ENCODE measurements at regions of chr5 and their contacts with region 1.

Region 1: GRCh38 chr5:138542956-138543729 is at the start of gene ETF1:
- DNase-seq: peak; percentile 95 to 100 (median 100)
- ATAC-seq: peak; percentile 95
- H3K4me3 ChIP-seq: peak within 1 kb of the TSS; percentile 87
- H3K4me3 Mint-ChIP-seq: peak within 1 kb of the TSS; percentile 94 to 100 (median 99)
- H3K27ac ChIP-seq: peak within 1 kb of the TSS; percentile 94
- H3K27ac Mint-ChIP-seq: peak within 1 kb of the TSS; percentile 97 to 100 (median 100)
- H3K4me1 ChIP-seq: peaks cover 36 to 41% of the 10 kb centered on the region in 2 donors
- H3K4me1 Mint-ChIP-seq: peaks cover 55 to 91% (median 73%) of the 10 kb centered on the region in 7 donors
- H3K27me3 ChIP-seq: no peaks in the 10 kb centered on the region
- H3K27me3 Mint-ChIP-seq: no peaks in the 10 kb centered on the region
- total RNA-seq, gene ETF1: 40.6 to 137 (median 84.1) TPM

Region 2: DNA sequence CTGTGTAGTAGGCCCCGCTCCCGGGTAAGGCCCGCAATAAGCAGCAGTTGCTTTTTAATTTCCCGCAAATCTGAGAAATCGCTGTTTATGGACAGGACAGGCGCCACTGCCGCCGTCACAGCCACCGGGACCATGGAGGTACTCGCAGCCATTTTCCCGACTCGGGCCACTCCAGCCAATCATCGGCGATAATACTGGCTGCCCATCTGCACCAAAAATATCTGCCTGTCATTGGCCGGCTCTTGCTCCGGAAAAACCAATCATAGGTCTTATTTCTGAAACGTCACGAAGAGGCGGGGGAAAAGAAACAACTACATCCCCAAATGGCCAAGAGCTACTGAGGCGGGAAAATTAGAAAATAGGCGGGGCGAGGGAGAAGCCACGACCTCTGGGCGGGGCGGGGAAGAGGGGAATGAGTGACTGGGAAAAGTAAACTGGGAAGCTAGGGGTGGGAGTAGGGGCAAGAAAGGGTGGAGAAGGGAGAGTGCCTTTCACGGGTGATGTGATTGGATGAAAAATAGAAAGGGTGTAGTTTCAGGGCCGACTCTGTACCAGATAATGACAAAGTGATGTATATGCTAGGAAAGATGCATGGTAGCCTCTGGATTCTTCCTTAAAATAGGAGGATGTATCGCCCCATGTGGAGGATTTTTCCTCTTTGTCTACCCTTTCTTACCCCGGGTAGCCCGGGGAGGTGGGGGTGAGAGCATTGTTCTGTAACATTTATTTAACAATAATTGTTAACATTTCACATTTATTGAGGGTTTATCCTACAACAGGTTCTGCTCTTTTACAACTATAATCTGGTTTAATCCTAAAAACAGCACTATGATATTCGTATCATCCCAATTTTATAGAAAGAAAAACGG is 329.7 kb before region 1 on chr5 and contains the start of gene CDC23:
- CTCF ChIA-PET with region 1: no interaction called
- POLR2A ChIA-PET with region 1: no interaction called
- intact Hi-C with region 1: loop called in 1 of 2 experiments (anchors 1 kb)
- DNase-seq: peak; percentile 65 to 95 (median 92)
- ATAC-seq: peak; percentile 98
- H3K4me3 ChIP-seq: peak within 1 kb of the TSS; percentile 97
- H3K4me3 Mint-ChIP-seq: peak within 1 kb of the TSS; percentile 92 to 99 (median 98)
- H3K27ac ChIP-seq: peak within 1 kb of the TSS; percentile 91
- H3K27ac Mint-ChIP-seq: peak within 1 kb of the TSS; percentile 95 to 98 (median 96)
- H3K4me1 ChIP-seq: peaks cover 0 to 8% of the 10 kb centered on the region in 2 donors
- H3K4me1 Mint-ChIP-seq: peaks cover 14 to 32% (median 27%) of the 10 kb centered on the region in 7 donors
- H3K27me3 ChIP-seq: no peaks in the 10 kb centered on the region
- H3K27me3 Mint-ChIP-seq: no peaks in the 10 kb centered on the region
- total RNA-seq, gene CDC23: 13.0 to 39.6 (median 25.5) TPM

Region 3: DNA sequence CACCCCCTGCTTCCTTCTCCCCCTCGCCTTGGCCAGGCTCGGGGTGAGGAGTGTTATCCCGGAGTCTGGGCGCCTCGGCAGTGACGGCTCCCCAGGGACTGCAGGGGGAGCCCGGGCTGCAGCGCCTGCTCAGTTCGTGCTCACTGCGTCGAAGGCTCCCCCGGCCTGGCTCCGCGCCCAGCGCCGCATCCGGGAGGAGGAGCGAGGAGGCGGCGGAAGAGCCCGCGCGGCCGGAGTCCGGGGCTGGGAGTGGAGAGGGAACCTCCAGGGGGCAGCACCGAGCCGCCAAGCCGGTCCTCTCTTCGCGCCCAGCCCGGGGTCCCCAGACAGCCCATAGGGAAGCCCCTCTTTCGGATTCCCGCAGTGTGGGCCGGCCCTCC is 79.1 kb before region 1 on chr5:
- CTCF ChIA-PET with region 1: no interaction called
- POLR2A ChIA-PET with region 1: interaction called, 17 read pairs
- intact Hi-C with region 1: loop called (anchors 1 kb)
- DNase-seq: peak; percentile 90 to 97 (median 94)
- ATAC-seq: peak; percentile 71
- H3K4me3 ChIP-seq: peak overlapping the region; percentile 95
- H3K4me3 Mint-ChIP-seq: peak overlapping the region; percentile 78 to 93 (median 89)
- H3K27ac ChIP-seq: peak overlapping the region; percentile 91
- H3K27ac Mint-ChIP-seq: peak overlapping the region; percentile 76 to 97 (median 91)
- H3K4me1 ChIP-seq: peaks cover 31 to 43% of the 10 kb centered on the region in 2 donors
- H3K4me1 Mint-ChIP-seq: peaks cover 36 to 54% (median 50%) of the 10 kb centered on the region in 7 donors
- H3K27me3 ChIP-seq: no peaks in the 10 kb centered on the region
- H3K27me3 Mint-ChIP-seq: peaks cover 0 to 20% (median 0%) of the 10 kb centered on the region in 5 donors

Region 4: DNA sequence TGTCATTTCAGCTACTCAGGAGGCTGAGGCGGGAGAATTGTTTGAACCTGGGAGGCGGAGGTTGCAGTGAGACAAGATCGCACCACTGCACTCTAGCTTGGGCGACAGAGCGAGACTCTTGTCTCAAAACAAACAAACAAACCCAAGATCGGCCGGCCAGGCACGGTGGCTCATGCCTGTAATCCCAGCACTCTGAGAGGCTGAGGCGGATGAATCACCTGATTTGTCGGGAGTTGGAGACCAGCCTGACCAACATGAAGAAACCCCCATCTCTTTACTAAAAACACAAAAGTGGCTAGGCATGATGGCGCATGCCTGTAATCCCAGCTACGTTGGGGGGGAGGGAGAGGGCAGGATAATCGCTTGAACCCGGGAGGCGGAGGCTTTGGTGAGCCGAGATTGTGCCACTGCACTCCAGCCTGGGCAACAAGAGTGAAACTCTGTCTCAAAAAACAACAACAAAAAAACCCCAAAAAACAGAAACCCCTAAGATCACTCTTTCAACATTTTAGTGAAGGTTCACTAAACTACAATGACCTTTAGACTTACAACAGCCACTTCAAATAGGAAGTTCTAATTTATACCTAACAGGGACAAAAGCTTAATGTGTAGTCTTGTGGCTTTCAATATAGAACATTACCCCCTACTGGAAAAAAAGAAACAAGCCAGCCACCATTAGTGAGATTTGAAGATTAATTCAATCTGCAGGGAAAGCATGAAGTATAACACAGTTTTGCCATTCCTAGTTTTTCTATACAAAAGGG is 25.1 kb after region 1 on chr5:
- CTCF ChIA-PET with region 1: interaction called, 4 read pairs
- POLR2A ChIA-PET with region 1: interaction called, 62 read pairs
- intact Hi-C with region 1: loop called in 1 of 2 experiments (anchors 2 kb)
- DNase-seq: no peak
- ATAC-seq: no peak
- H3K4me3 ChIP-seq: no peak overlapping the region
- H3K4me3 Mint-ChIP-seq: peak overlapping the region in 2 of 10 donors; percentile 2
- H3K27ac ChIP-seq: no peak overlapping the region
- H3K27ac Mint-ChIP-seq: peak overlapping the region in 7 of 9 donors; percentile 23 to 63 (median 49)
- H3K4me1 ChIP-seq: peaks cover 24 to 38% of the 10 kb centered on the region in 2 donors
- H3K4me1 Mint-ChIP-seq: peaks cover 24 to 77% (median 60%) of the 10 kb centered on the region in 7 donors
- H3K27me3 ChIP-seq: no peaks in the 10 kb centered on the region
- H3K27me3 Mint-ChIP-seq: no peaks in the 10 kb centered on the region

Region 5: GRCh38 chr5:139341650-139342422 is 798.7 kb after region 1 on chr5 and contains the start of gene PAIP2:
- CTCF ChIA-PET with region 1: no interaction called
- POLR2A ChIA-PET with region 1: interaction called, 3 read pairs
- intact Hi-C with region 1: loop called (anchors 1 kb)
- DNase-seq: peak; percentile 94 to 98 (median 97)
- ATAC-seq: peak; percentile 95
- H3K4me3 ChIP-seq: peak within 1 kb of the TSS; percentile 96
- H3K4me3 Mint-ChIP-seq: peak within 1 kb of the TSS; percentile 95 to 100 (median 98)
- H3K27ac ChIP-seq: peak within 1 kb of the TSS; percentile 98
- H3K27ac Mint-ChIP-seq: peak within 1 kb of the TSS; percentile 96 to 100 (median 99)
- H3K4me1 ChIP-seq: peaks cover 28 to 30% of the 10 kb centered on the region in 2 donors
- H3K4me1 Mint-ChIP-seq: peaks cover 34 to 65% (median 55%) of the 10 kb centered on the region in 7 donors
- H3K27me3 ChIP-seq: no peaks in the 10 kb centered on the region
- H3K27me3 Mint-ChIP-seq: peaks cover 0 to 5% (median 0%) of the 10 kb centered on the region in 5 donors
- total RNA-seq, gene PAIP2: 88.8 to 121 (median 106) TPM

Region 6: GRCh38 chr5:140174465-140175366 is 1631.6 kb after region 1 on chr5 and contains the start of gene CYSTM1:
- CTCF ChIA-PET with region 1: no interaction called
- POLR2A ChIA-PET with region 1: no interaction called
- intact Hi-C with region 1: loop called in 1 of 2 experiments (anchors 1 kb)
- DNase-seq: peak; percentile 95 to 98 (median 97)
- ATAC-seq: peak; percentile 94
- H3K4me3 ChIP-seq: peak within 1 kb of the TSS; percentile 97
- H3K4me3 Mint-ChIP-seq: peak within 1 kb of the TSS; percentile 84 to 95 (median 91)
- H3K27ac ChIP-seq: peak within 1 kb of the TSS; percentile 89
- H3K27ac Mint-ChIP-seq: peak within 1 kb of the TSS; percentile 78 to 98 (median 95)
- H3K4me1 ChIP-seq: peaks cover 8 to 14% of the 10 kb centered on the region in 2 donors
- H3K4me1 Mint-ChIP-seq: peaks cover 7 to 20% (median 14%) of the 10 kb centered on the region in 7 donors
- H3K27me3 ChIP-seq: no peaks in the 10 kb centered on the region
- H3K27me3 Mint-ChIP-seq: peaks cover 0 to 30% (median 0%) of the 10 kb centered on the region in 5 donors
- total RNA-seq, gene CYSTM1: 1.6 to 11.1 (median 3.5) TPM

Measured in naive thymus-derived CD4-positive, alpha-beta T cell (primary cell).